Dendritic cell treated with granulocyte-macrophage colony-stimulating factor and Interleukin-4, amounts not matched to agents 40 ng/mL and 50 ng/mL, for 4 days (primary cell): ENCODE measurements at regions of chr12 and their contacts with region 1.

Region 1: DNA sequence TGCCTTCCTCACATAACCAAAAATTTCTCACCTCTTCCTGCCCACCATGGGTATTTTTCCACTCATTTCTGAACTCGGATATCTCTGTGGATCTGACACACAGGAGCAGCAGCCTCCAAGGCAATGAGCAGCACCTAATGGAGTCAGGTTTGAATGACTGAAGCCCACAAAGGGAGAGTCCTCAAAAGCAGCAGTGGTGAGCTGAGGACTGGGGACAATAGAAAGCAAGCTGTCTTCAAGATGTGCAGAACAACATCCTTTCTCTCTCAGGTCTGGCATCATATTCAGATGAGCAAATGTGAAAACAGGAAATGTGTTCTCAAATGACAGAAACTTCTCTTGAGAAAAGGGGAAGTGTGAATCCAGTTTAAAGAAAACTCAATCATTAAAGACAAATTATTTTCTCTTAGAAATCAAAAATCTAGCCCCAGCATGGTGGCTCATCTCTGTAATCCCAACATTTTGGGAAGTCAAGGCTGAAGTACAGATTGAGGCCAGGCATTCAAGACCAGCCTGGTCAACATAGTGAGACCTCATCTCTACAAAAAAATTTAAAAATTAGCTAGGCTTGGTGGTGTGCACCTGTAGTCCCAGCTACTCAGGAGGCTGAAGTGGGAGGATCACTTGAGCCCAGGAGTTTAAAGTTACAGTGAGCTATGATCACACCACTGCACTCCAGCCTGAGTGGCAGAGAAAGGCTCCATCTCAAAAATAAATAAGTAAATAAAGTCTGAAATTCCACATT is 54.2 kb downstream of the C12orf42 start:
- H3K4me3 Mint-ChIP-seq: no peak overlapping the region
- H3K27ac Mint-ChIP-seq: no peak overlapping the region
- H3K4me1 Mint-ChIP-seq: peaks cover 6% of the 10 kb centered on the region
- H3K27me3 Mint-ChIP-seq: no peaks in the 10 kb centered on the region

Region 2: GRCh38 chr12:103431387-103431786 is 10.2 kb before region 1 on chr12:
- intact Hi-C with region 1: loop called (anchors 1 kb)
- H3K4me3 Mint-ChIP-seq: no peak overlapping the region
- H3K27ac Mint-ChIP-seq: no peak overlapping the region
- H3K4me1 Mint-ChIP-seq: no peaks in the 10 kb centered on the region
- H3K27me3 Mint-ChIP-seq: peaks cover 6% of the 10 kb centered on the region

Region 3: DNA sequence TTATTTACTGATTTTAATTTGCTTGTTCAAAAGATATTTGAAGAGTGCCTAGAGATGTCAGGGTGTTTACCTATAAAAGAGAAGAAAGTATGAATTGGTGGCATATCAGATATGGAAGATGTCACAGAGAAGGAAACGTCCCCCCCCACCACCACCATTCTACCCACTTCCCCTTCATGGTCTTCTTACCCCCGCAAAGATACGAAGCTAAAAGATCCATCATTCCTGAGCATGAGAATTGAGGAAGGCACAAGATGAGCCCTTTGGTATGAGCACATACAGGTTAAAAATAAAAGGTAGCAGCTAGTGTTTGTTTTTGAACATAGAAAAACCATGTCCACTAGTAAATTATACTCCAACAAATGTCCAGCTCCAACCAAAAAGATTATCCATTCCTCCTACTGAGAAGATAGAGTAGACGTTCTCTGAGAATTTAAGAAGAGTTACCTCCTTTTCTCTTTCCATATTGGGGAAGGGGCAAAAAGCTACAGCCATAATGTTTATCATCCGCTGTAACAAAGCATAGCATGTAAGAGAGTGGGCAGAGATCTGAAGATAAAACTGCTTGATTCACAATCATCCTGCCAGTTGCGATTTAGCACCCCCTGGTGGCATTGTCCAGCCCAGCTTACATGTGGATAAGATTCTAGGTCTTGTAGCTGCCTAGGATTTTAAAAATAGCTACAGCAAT is 667.3 kb after region 1 on chr12:
- intact Hi-C with region 1: no loop called
- H3K4me3 Mint-ChIP-seq: no peak overlapping the region
- H3K27ac Mint-ChIP-seq: no peak overlapping the region
- H3K4me1 Mint-ChIP-seq: peaks cover 14% of the 10 kb centered on the region
- H3K27me3 Mint-ChIP-seq: no peaks in the 10 kb centered on the region